ENCODE measurements at regions of chr2 and their contacts with region 1.

Region 1: DNA sequence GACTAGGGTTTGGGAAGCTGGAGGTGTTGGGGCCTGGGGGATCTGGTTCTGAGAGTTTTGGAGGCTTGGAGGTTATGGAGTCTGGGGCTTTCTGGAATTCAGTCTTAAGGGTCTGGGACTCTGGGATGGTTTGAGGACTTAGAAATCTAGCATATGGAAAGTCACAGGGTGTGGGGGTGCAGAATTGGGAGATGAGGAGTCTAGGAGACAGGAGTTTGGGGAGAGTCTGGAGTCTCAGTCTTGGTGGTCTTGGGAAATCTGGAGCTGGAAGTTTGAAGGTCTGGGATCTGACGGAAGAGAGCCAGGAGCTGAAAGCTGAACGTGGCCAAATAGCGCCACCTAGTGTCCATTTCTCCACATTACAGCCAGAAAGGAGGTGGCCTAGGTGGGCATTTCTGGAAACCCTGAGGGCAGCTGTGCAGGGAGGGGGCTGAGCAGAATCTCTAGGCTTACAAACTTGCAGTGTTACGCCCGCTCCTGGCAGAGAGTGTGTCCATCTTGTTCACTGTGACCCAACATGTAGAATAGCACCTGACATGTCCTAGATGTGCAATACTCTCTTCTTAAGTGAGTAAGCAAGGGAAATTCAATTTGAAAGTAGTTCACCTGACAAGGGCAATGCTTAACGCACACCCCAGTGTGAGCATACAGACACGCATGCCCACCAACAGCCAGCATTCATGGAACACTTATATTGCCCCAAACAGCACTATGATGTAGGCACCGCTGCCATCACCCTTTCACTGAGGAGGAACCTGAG is 204.8 kb downstream of the TFCP2L1 start:
- DNase-seq: no peak
- ATAC-seq: peak; percentile 60

Region 2: GRCh38 chr2:120694034-120694433 is 386.2 kb before region 1 on chr2:
- intact Hi-C with region 1: loop called (anchors 2 kb)
- DNase-seq: no peak
- ATAC-seq: no peak

Region 3: DNA sequence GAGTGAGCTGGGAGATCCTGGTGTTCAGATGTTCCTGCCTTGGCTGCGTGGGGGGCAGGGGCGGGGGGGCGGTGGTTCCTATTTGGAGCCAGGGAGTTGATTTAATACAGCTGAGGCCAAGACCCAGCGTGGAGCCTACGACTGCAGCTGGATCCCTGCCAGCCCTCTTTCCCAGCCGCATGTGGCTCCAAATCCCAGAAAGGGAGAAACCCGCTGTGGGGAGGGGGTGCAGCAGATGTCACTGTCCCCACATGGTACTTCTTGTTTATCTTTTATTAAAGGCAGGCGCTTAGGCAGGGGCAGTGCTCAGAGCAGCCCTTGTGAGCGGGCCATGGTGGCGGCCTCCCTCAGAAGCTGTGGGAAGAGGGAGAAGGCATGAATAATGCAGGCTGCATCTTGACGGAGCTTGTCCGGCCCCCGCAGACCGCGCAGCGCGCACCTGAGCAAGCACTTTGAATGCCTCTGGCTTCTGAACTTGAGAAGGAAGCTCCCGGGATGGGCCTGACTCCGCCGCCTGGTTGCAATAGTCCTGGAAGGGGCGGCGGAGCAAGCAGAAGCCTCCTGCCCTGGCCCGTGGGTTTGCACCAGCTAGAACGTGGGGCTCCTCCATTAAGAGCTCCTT is 232.4 kb before region 1 on chr2:
- intact Hi-C with region 1: no loop called
- DNase-seq: no peak
- ATAC-seq: no peak